Breast epithelium (tissue), 4 donors: ENCODE measurements at regions of chr18 and their contacts with region 1.

Region 1: DNA sequence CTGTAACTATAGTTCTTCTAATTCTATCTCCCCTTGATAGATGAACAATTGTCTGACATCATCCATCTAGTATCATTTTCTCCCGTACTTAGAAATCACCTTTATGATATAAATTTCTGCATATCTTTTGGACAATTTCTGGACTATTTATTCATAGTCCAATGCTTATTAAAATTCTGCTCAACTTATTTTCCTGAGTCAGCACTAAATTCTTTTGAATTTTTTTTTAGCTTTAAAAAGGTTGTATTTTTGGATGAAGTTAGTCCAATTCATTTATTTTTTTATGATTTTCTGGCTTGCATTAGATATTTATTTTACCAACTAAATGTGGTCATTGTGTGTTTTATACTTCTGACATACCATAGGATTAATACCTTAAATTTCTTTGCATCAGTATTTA is 538.5 kb upstream of the DCC start:
- DNase-seq: no peak
- H3K4me3 ChIP-seq: no peak overlapping the region
- H3K27ac ChIP-seq: no peak overlapping the region
- H3K4me1 ChIP-seq: no peaks in the 10 kb centered on the region
- H3K27me3 ChIP-seq: no peaks in the 10 kb centered on the region
- CTCF ChIP-seq: no peak
- POLR2A ChIP-seq: no peak

Region 2: DNA sequence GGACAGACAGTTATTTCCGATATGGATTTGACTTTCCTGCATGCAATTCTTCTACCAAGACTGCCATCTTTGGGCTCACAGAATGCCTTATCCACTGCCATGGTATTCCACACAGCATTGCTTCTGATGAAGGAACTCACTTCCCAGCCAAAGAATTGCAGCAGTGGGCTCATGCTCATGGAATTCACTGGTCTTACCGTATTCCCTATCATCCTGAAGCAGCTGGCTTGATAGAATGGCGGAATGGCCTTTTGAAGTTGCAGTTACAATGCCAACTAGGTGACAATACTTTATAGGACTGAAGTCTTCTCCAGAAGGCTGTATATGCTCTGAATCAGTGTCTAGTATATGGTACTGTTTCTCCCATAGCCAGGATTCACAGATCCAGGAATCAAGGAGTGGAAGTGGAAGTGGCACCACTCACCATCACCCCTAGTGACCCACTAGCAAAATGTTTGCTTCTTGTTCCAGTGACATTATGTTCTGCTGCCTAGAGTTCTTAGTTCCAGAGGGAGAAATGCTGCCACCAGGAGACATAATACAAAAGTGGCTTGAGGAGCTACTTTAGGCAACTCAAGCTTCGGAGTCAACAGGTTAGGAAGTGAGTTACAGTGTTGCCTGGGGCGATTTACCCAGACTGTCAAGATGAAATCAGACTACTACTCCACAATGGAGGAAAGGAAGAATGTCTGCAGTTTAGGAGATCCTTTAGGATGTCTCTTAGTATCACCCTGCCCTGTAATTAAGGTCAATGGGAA is 795.3 kb before region 1 on chr18:
- intact Hi-C with region 1: no loop called
- DNase-seq: no peak
- H3K4me3 ChIP-seq: no peak overlapping the region
- H3K27ac ChIP-seq: no peak overlapping the region
- H3K4me1 ChIP-seq: no peaks in the 10 kb centered on the region
- H3K27me3 ChIP-seq: no peaks in the 10 kb centered on the region
- CTCF ChIP-seq: no peak
- POLR2A ChIP-seq: no peak

Region 3: GRCh38 chr18:51778115-51778514 is 23.4 kb before region 1 on chr18:
- intact Hi-C with region 1: loop called (anchors 2 kb)
- DNase-seq: no peak
- H3K4me3 ChIP-seq: no peak overlapping the region
- H3K27ac ChIP-seq: no peak overlapping the region
- H3K4me1 ChIP-seq: no peaks in the 10 kb centered on the region
- H3K27me3 ChIP-seq: no peaks in the 10 kb centered on the region
- CTCF ChIP-seq: no peak
- POLR2A ChIP-seq: no peak